A549 (cell line): ENCODE measurements at regions of chr14 and their contacts with region 1.

Region 1: DNA sequence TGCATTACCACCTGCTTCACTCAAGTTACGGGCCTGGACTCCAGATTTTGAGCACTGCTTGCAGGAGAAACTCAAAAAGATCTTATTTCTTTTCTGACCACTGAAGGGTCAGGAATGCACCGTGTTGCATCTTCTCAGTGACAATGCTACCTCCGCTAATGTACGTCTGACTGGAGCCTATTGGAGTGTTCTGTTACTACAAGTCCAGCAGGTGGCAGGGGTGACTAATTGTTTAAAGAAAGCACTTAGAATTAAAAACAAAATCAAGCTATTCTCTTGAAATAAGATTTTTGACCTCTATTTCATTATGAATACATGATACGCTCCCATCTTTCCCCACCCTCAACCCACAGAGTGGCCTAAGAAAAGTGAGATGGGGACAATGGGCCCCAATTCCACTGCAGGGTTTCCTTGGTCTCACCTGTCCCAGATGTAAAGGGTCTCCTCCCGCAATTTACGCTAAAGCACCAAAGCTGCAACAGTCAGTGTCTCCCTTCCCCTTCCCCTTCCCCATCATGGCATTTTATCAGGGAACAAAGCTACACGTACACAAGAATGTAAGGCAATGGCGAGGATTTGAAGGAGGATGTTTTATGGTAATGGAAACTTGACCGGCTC is 2.2 kb downstream of the TBPL2 start:
- DNase-seq: peak; percentile 59 to 71
- ATAC-seq: peak; percentile 93
- H3K4me3 ChIP-seq: no peak overlapping the region
- H3K27ac ChIP-seq: no peak overlapping the region
- H3K4me1 ChIP-seq: no peaks in the 10 kb centered on the region
- CTCF ChIP-seq: peak; percentile 86
- EP300 ChIP-seq: no peak
- POLR2A ChIP-seq: no peak
- RAD21 ChIP-seq: peak; percentile 87 to 89

Region 2: DNA sequence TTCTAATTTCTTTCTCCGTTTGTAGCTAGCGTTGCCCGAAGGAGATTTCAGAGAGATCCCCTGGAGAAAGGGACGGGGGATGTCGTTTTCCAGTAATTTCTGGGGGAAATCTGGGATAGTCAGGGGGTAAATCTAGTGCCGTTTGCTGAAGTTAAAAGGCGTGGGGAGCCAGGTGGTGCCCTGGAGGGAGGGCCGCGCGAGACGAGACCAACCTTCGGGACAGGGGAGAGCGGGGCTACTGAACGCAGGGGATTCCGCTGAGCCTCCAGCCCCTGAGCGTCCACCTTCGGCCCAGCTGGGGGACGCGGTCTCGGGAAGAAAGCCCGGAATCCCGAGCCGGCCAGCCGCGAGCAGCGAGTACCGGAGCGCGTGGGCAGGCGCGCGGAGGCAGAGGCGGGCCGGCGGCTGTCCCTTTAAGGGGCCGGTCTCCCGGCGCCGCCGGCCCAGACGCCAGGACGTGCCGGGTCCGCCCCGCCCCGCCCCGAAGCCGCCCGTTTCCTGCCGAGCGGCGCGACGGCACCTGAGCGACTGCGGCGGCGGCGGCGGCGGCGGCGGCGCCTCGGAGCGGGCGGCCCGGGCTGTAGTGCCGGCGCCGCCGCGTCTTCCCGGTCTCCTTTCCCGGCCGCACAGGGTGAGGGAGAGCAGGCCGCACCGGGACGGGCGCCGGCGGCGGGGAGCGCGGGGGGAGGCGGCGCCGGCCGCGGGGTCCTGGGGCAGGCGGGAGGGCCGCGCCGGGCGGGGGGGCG is 141.7 kb after region 1 on chr14 and contains the start of gene KTN1:
- CTCF ChIA-PET with region 1: interaction called, 24 read pairs
- POLR2A ChIA-PET with region 1: no interaction called
- DNase-seq: peak; percentile 58 to 84
- ATAC-seq: peak; percentile 93 to 94
- H3K4me3 ChIP-seq: peak within 1 kb of the TSS; percentile 95
- H3K27ac ChIP-seq: peak within 1 kb of the TSS; percentile 94 to 99
- H3K4me1 ChIP-seq: peaks cover 40% of the 10 kb centered on the region
- CTCF ChIP-seq: no peak
- EP300 ChIP-seq: no peak
- POLR2A ChIP-seq: peak; percentile 76
- RAD21 ChIP-seq: peak in 1 of 2 experiments; percentile 18; a peak in 2 of 5 replicates
- polyA plus RNA-seq, gene KTN1: 118 and 233 TPM in 2 replicates

Region 3: GRCh38 chr14:55661029-55661428 is 222.9 kb after region 1 on chr14:
- CTCF ChIA-PET with region 1: interaction called, 10 read pairs
- POLR2A ChIA-PET with region 1: no interaction called
- DNase-seq: no peak
- ATAC-seq: no peak
- H3K4me3 ChIP-seq: no peak overlapping the region
- H3K27ac ChIP-seq: no peak overlapping the region
- H3K4me1 ChIP-seq: no peaks in the 10 kb centered on the region
- CTCF ChIP-seq: no peak
- EP300 ChIP-seq: no peak
- POLR2A ChIP-seq: no peak
- RAD21 ChIP-seq: no peak

Region 4: GRCh38 chr14:56422703-56423213 is 984.6 kb after region 1 on chr14:
- CTCF ChIA-PET with region 1: interaction called, 18 read pairs
- POLR2A ChIA-PET with region 1: no interaction called
- DNase-seq: peak; percentile 50 to 55
- ATAC-seq: peak; percentile 86 to 91
- H3K4me3 ChIP-seq: no peak overlapping the region
- H3K27ac ChIP-seq: no peak overlapping the region
- H3K4me1 ChIP-seq: no peaks in the 10 kb centered on the region
- CTCF ChIP-seq: peak; percentile 66
- EP300 ChIP-seq: no peak
- POLR2A ChIP-seq: no peak
- RAD21 ChIP-seq: peak; percentile 74

Region 5: GRCh38 chr14:56491299-56492285 is 1053.4 kb after region 1 on chr14:
- CTCF ChIA-PET with region 1: interaction called, 11 read pairs
- POLR2A ChIA-PET with region 1: no interaction called
- DNase-seq: peak; percentile 21 to 72
- ATAC-seq: peak; percentile 70 to 84
- H3K4me3 ChIP-seq: no peak overlapping the region
- H3K27ac ChIP-seq: no peak overlapping the region
- H3K4me1 ChIP-seq: no peaks in the 10 kb centered on the region
- CTCF ChIP-seq: peak; percentile 76
- EP300 ChIP-seq: no peak
- POLR2A ChIP-seq: no peak
- RAD21 ChIP-seq: peak; percentile 70 to 75